CD4-positive, alpha-beta T cell (primary cell): ENCODE measurements at regions of chr1 and their contacts with region 1.

Region 1: DNA sequence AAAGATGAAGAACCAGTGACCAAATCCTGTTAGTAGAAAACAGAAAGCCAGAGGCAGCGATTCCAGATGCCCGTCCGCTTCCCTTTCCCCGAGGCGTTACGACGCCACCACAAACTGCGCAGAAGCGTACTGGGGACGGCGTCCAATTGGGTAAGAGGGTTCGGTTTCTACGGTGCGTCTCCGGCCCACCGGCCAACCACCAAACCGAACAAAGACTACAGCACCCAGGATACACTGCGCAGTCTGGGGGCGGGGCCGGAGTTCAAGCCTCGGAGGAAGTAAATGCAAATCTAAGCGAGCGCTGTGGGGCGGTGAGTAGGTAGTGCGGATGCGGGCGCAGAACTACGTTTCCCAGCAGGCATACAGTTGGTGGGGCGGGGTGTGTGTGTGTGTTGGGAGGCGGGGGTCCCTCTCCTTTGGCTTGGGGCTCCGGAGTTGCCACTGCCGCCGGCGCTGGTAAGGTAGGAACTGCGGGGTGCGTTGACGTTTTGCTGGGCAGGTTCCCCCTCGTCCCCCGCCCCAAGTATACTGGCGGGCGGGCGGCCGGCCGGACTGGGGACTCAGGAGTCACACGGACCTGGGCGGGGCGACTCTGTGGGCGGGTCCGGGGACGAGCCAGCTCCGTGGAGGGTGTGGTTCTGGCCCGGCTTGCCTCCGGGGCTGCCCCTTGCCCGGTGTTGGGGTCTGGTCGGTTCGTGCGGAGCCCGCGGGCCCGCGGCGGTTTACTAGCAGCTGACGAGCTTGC is at the starts of genes SWT1 and TRMT1L:
- DNase-seq: peak; percentile 96 to 99 (median 98)
- ATAC-seq: peak; percentile 91
- H3K4me3 ChIP-seq: peak within 1 kb of the TSS; percentile 92
- H3K4me3 Mint-ChIP-seq: peak within 1 kb of the TSS; percentile 99
- H3K27ac ChIP-seq: peak within 1 kb of the TSS; percentile 92 to 97
- H3K27ac Mint-ChIP-seq: peak within 1 kb of the TSS; percentile 95
- H3K4me1 ChIP-seq: peaks cover 16% of the 10 kb centered on the region
- H3K4me1 Mint-ChIP-seq: peaks cover 55% of the 10 kb centered on the region
- H3K27me3 ChIP-seq: no peaks in the 10 kb centered on the region
- H3K27me3 Mint-ChIP-seq: no peaks in the 10 kb centered on the region
- CTCF ChIP-seq: no peak
- total RNA-seq, gene SWT1: 4.1 to 5.3 TPM
- total RNA-seq, gene TRMT1L: 2.8 to 4.7 TPM

Region 2: GRCh38 chr1:184754476-184755225 is 402.4 kb before region 1 on chr1 and contains the start of gene EDEM3:
- CTCF ChIA-PET with region 1: no interaction called
- POLR2A ChIA-PET with region 1: interaction called, 24 read pairs
- intact Hi-C with region 1: loop called (anchors 2 kb)
- DNase-seq: peak; percentile 93 to 100 (median 96)
- ATAC-seq: peak; percentile 91
- H3K4me3 ChIP-seq: peak within 1 kb of the TSS; percentile 96
- H3K4me3 Mint-ChIP-seq: peak within 1 kb of the TSS; percentile 92
- H3K27ac ChIP-seq: peak within 1 kb of the TSS; percentile 90 to 95
- H3K27ac Mint-ChIP-seq: peak within 1 kb of the TSS; percentile 87
- H3K4me1 ChIP-seq: peaks cover 8% of the 10 kb centered on the region
- H3K4me1 Mint-ChIP-seq: peaks cover 52% of the 10 kb centered on the region
- H3K27me3 ChIP-seq: no peaks in the 10 kb centered on the region
- H3K27me3 Mint-ChIP-seq: no peaks in the 10 kb centered on the region
- CTCF ChIP-seq: no peak
- total RNA-seq, gene EDEM3: 19.9 to 20.0 TPM

Region 3: GRCh38 chr1:185170291-185170848 is 13.3 kb after region 1 on chr1:
- CTCF ChIA-PET with region 1: interaction called, 18 read pairs
- POLR2A ChIA-PET with region 1: interaction called, 4 read pairs
- intact Hi-C with region 1: no loop called
- DNase-seq: peak in 10 of 14 experiments; percentile 3 to 74 (median 26)
- ATAC-seq: peak; percentile 87
- H3K4me3 ChIP-seq: no peak overlapping the region
- H3K4me3 Mint-ChIP-seq: no peak overlapping the region
- H3K27ac ChIP-seq: no peak overlapping the region
- H3K27ac Mint-ChIP-seq: no peak overlapping the region
- H3K4me1 ChIP-seq: peaks cover 2% of the 10 kb centered on the region
- H3K4me1 Mint-ChIP-seq: peaks cover 10% of the 10 kb centered on the region
- H3K27me3 ChIP-seq: no peaks in the 10 kb centered on the region
- H3K27me3 Mint-ChIP-seq: no peaks in the 10 kb centered on the region
- CTCF ChIP-seq: peak; percentile 80

Region 4: GRCh38 chr1:185566995-185567394 is 410.0 kb after region 1 on chr1:
- CTCF ChIA-PET with region 1: no interaction called
- POLR2A ChIA-PET with region 1: interaction called, 10 read pairs
- intact Hi-C with region 1: loop called (anchors 10 kb)
- DNase-seq: peak in 12 of 14 experiments; percentile 15 to 95 (median 38)
- ATAC-seq: peak; percentile 81
- H3K4me3 ChIP-seq: no peak overlapping the region
- H3K4me3 Mint-ChIP-seq: peak overlapping the region; percentile 74
- H3K27ac ChIP-seq: peak overlapping the region; percentile 88 to 91
- H3K27ac Mint-ChIP-seq: peak overlapping the region; percentile 94
- H3K4me1 ChIP-seq: peaks cover 40% of the 10 kb centered on the region
- H3K4me1 Mint-ChIP-seq: peaks cover 92% of the 10 kb centered on the region
- H3K27me3 ChIP-seq: no peaks in the 10 kb centered on the region
- H3K27me3 Mint-ChIP-seq: no peaks in the 10 kb centered on the region
- CTCF ChIP-seq: no peak

Region 5: DNA sequence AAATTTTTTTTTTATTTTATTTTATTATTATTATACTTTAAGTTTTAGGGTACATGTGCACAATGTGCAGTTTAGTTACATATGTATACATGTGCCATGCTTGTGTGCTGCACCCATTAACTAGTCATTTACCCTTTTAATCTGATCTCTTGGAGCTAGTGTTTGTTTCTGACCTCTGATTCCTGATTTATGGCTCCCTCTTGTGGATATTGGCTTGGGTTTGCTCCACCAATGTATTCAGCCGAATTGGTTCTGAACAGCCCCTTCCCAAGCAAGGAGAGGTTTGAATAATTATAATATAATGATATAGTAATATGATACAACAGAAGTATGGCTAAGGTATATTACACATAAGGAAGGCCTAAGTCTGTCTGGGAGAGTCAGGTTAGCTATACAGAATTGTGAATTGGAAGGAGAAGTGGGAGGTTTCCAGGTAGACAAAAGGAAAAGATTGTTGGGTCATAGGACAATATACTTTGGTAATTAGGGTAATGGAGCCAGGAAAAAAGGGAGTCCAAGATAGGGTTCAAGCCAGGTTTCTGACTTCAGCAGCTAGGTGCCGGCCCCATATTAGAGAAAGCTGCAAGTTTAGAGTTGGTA is 524.1 kb after region 1 on chr1:
- CTCF ChIA-PET with region 1: no interaction called
- POLR2A ChIA-PET with region 1: interaction called, 3 read pairs
- intact Hi-C with region 1: loop called in 1 of 2 experiments (anchors 5 kb)
- DNase-seq: peak in 5 of 14 experiments; percentile 6 to 74 (median 58)
- ATAC-seq: peak; percentile 62
- H3K4me3 ChIP-seq: no peak overlapping the region
- H3K4me3 Mint-ChIP-seq: no peak overlapping the region
- H3K27ac ChIP-seq: no peak overlapping the region
- H3K27ac Mint-ChIP-seq: no peak overlapping the region
- H3K4me1 ChIP-seq: peaks cover 9% of the 10 kb centered on the region
- H3K4me1 Mint-ChIP-seq: peaks cover 33% of the 10 kb centered on the region
- H3K27me3 ChIP-seq: no peaks in the 10 kb centered on the region
- H3K27me3 Mint-ChIP-seq: no peaks in the 10 kb centered on the region
- CTCF ChIP-seq: peak; percentile 73